Activated CD4-positive, alpha-beta T cell treated with anti-CD3 and anti-CD28 coated beads for 36 hours (primary cell): ENCODE measurements at regions of chr13 and their contacts with region 1.

Region 1: DNA sequence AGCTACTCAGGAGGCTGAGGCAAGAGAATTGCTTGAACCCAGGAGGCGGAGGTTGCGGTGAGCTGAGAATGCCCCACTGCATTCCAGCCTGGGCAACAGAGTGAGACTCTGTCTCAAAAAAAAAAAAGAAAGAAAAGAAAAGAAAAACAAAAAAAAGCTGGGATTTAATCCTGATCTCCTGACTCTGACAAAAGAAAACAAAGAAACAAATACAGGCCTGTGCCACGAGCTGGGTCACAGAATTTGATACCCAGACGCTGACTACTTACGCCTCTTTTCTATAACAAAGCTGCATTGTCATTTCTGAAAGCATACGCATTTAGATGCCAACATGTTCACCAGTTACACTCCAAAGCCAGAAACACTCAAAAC is 18.2 kb upstream of the GTF2F2 start:
- DNase-seq: no peak
- ATAC-seq: no peak
- H3K4me3 Mint-ChIP-seq: no peak overlapping the region
- H3K27ac Mint-ChIP-seq: no peak overlapping the region
- H3K4me1 Mint-ChIP-seq: no peaks in the 10 kb centered on the region
- H3K27me3 Mint-ChIP-seq: peaks cover 5% of the 10 kb centered on the region

Region 2: GRCh38 chr13:45068036-45069001 is 33.8 kb before region 1 on chr13:
- CTCF ChIA-PET with region 1: no interaction called
- POLR2A ChIA-PET with region 1: no interaction called
- intact Hi-C with region 1: no loop called
- DNase-seq: no peak
- ATAC-seq: no peak
- H3K4me3 Mint-ChIP-seq: no peak overlapping the region
- H3K27ac Mint-ChIP-seq: no peak overlapping the region
- H3K4me1 Mint-ChIP-seq: no peaks in the 10 kb centered on the region
- H3K27me3 Mint-ChIP-seq: peaks cover 16% of the 10 kb centered on the region

Region 3: GRCh38 chr13:45257638-45258338 is 155.7 kb after region 1 on chr13:
- CTCF ChIA-PET with region 1: no interaction called
- POLR2A ChIA-PET with region 1: no interaction called
- intact Hi-C with region 1: no loop called
- DNase-seq: no peak
- ATAC-seq: no peak
- H3K4me3 Mint-ChIP-seq: no peak overlapping the region
- H3K27ac Mint-ChIP-seq: no peak overlapping the region
- H3K4me1 Mint-ChIP-seq: peaks cover 29% of the 10 kb centered on the region
- H3K27me3 Mint-ChIP-seq: no peaks in the 10 kb centered on the region

Region 4: GRCh38 chr13:45881353-45881752 is 779.2 kb after region 1 on chr13:
- CTCF ChIA-PET with region 1: no interaction called
- POLR2A ChIA-PET with region 1: interaction called, 11 read pairs
- intact Hi-C with region 1: no loop called
- DNase-seq: no peak
- ATAC-seq: no peak
- H3K4me3 Mint-ChIP-seq: no peak overlapping the region
- H3K27ac Mint-ChIP-seq: no peak overlapping the region
- H3K4me1 Mint-ChIP-seq: no peaks in the 10 kb centered on the region
- H3K27me3 Mint-ChIP-seq: peaks cover 3% of the 10 kb centered on the region